Heart left ventricle (tissue), 16 donors: ENCODE measurements at regions of chr21 and their contacts with region 1.

Region 1: DNA sequence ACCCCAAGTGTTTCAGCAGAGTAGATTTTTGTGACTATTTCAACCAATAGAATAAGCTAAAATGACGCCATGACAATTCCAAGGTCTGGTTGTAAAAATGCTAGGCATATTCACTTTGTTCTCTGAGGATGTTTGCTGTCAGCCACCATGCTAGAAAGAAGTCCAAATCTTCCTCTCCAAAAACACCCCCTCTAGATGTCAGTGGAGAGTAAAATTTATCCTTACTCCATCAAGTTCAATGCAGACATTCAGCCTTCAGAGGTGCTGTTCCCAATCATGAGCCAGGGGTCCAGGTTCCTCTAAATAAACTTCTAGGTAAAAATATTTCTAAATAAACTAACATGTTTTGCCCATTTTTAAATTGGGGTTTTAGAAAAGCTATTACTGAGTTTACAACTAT is 395.4 kb upstream of the ADAMTS5 start:
- DNase-seq: no peak
- ATAC-seq: no peak
- H3K4me3 ChIP-seq: no peak overlapping the region
- H3K27ac ChIP-seq: no peak overlapping the region
- H3K4me1 ChIP-seq: no peaks in the 10 kb centered on the region
- H3K27me3 ChIP-seq: no peaks in the 10 kb centered on the region
- CTCF ChIP-seq: peak in 10 of 12 donors; percentile 6 to 51 (median 35)
- POLR2A ChIP-seq: no peak

Region 2: DNA sequence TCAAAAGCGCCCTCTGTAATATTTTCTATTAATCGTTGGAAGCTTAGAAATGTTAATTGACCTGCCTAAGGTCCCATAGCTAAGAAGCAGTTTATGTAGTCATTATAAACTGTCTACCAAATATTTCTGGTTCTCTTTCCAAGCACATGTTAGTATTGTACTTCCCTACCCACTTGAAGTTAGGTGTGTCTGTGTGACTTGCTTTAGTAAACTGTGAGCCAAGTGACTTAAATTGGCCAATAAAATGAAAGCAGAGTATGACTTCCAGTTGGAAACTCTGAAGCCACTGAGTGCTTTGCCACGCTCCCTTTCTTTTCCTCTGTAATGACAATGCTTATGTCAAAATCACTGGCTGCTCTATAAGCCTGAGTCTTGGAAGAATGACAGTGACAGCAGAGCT is 496.4 kb before region 1 on chr21:
- intact Hi-C with region 1: loop called in 1 of 10 experiments (anchors 10 kb)
- DNase-seq: no peak
- ATAC-seq: no peak
- H3K4me3 ChIP-seq: no peak overlapping the region
- H3K27ac ChIP-seq: no peak overlapping the region
- H3K4me1 ChIP-seq: no peaks in the 10 kb centered on the region
- H3K27me3 ChIP-seq: no peaks in the 10 kb centered on the region
- CTCF ChIP-seq: no peak
- POLR2A ChIP-seq: no peak

Region 3: GRCh38 chr21:27306791-27307775 is 55.2 kb before region 1 on chr21:
- intact Hi-C with region 1: no loop called
- DNase-seq: no peak
- ATAC-seq: peak; percentile 55 to 73 (median 61)
- H3K4me3 ChIP-seq: no peak overlapping the region
- H3K27ac ChIP-seq: peak overlapping the region in 6 of 12 donors; percentile 16 to 43 (median 28)
- H3K4me1 ChIP-seq: peaks cover 0 to 17% (median 0%) of the 10 kb centered on the region in 12 donors
- H3K27me3 ChIP-seq: no peaks in the 10 kb centered on the region
- CTCF ChIP-seq: no peak
- POLR2A ChIP-seq: no peak

Region 4: DNA sequence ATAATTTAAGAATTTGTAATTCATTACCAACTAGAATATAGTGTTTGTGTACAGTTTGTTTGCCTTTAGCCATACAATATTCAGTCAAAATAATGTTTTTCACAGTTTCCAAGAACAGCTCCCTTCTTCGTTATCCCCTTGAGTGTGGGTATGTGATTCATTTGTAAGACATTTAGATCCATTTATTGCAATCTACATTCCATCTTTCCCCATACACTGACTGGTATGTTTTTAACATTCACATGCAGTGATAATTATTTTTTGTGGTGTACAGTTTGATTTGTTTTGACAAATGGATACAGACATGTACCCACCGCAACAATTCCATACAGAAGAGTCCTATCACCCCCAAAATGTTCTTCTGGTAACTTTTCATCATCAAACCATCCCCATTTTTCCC is 193.7 kb after region 1 on chr21:
- intact Hi-C with region 1: loop called in 6 of 10 experiments (anchors 5 to 10 kb)
- DNase-seq: no peak
- ATAC-seq: no peak
- H3K4me3 ChIP-seq: no peak overlapping the region
- H3K27ac ChIP-seq: no peak overlapping the region
- H3K4me1 ChIP-seq: no peaks in the 10 kb centered on the region
- H3K27me3 ChIP-seq: no peaks in the 10 kb centered on the region
- CTCF ChIP-seq: no peak
- POLR2A ChIP-seq: no peak